ENCODE measurements at regions of chr3 and their contacts with region 1.

Region 1: GRCh38 chr3:196969660-196970546 is 1.3 kb upstream of the PIGZ start:
- DNase-seq: peak; percentile 85

Region 2: GRCh38 chr3:196837819-196838420 is 132.0 kb before region 1 on chr3:
- intact Hi-C with region 1: loop called (anchors 2 kb)
- DNase-seq: peak; percentile 77

Region 3: GRCh38 chr3:196867507-196868296 is 102.2 kb before region 1 on chr3 and contains the start of gene SENP5:
- intact Hi-C with region 1: no loop called
- DNase-seq: peak; percentile 97
- total RNA-seq, gene SENP5: 21.6 TPM

Region 4: GRCh38 chr3:197149528-197149927 is 179.6 kb after region 1 on chr3:
- intact Hi-C with region 1: no loop called
- DNase-seq: no peak